Psoas muscle (tissue), 8 donors: ENCODE measurements at regions of chr7 and their contacts with region 1.

Region 1: DNA sequence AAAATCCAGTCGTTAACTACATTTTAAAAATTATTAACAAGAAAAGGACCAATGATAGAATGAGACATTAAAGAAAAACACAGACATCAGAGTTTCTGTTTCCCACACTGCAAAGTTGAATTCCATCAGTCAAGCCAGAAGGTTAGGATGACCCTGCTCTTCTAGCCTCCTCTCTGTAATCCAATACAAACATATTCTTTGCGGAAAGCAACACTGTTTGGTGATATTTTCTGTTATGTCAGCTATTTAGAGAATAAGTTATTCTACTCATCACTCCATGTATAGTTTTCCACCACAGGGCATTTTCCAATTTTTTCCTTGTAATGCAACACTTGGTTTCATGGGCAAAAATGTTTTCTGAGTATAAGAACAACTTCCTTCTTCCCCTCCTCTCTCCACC is 152.3 kb downstream of the EVX1 start:
- DNase-seq: no peak
- ATAC-seq: no peak
- H3K4me3 ChIP-seq: no peak overlapping the region
- H3K27ac ChIP-seq: no peak overlapping the region
- H3K4me1 ChIP-seq: no peaks in the 10 kb centered on the region
- H3K27me3 ChIP-seq: peaks cover 0 to 7% (median 0%) of the 10 kb centered on the region in 3 donors
- CTCF ChIP-seq: no peak

Region 2: DNA sequence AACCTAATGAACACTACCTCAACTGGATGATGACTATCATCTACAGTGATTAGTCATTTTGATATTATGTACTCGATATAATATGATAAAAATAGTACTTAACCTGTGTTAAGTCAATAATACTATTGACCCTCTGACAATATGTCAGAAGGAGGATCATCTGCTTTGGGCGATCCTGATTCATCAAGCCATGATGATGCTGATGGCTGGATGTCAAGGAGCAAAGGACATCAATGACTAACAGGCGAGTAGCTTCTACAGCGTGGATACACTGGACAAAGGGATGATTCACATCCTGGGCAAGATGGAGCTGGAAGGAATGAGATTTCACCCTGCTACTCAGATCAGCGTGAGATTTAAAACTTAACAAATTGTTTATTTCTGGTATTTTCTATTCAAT is 436.0 kb before region 1 on chr7:
- intact Hi-C with region 1: no loop called
- DNase-seq: no peak
- ATAC-seq: no peak
- H3K4me3 ChIP-seq: no peak overlapping the region
- H3K27ac ChIP-seq: no peak overlapping the region
- H3K4me1 ChIP-seq: no peaks in the 10 kb centered on the region
- H3K27me3 ChIP-seq: no peaks in the 10 kb centered on the region
- CTCF ChIP-seq: no peak

Region 3: DNA sequence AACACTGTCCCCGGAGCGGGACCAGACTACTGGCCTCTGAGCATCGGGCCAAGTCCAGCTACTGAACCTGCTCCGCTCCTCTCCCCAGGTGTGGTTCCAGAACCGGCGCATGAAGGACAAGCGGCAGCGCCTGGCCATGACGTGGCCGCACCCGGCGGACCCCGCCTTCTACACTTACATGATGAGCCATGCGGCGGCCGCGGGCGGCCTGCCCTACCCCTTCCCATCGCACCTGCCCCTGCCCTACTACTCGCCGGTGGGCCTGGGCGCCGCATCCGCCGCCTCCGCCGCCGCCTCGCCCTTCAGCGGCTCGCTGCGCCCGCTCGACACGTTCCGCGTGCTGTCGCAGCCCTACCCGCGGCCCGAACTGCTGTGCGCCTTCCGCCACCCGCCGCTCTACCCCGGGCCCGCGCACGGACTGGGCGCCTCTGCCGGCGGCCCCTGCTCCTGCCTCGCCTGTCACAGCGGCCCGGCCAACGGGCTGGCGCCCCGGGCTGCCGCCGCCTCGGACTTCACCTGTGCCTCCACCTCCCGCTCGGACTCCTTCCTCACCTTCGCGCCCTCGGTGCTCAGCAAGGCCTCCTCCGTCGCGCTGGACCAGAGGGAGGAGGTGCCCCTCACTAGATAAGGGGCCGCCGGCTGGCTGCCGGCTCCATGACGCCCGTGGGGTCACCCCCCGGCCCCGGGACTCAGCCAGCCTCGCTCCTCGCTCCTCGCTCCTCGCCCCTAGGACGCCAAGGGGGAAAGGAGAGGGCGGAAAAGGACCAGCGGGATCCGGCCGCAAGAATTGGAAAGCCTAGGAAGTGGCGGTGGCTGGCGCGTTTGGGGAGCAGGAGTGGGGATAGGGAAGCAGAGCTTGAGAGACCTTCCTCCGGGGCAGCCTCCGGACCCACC is 148.8 kb before region 1 on chr7:
- intact Hi-C with region 1: loop called in 1 of 2 experiments (anchors 5 kb)
- DNase-seq: peak in 1 of 2 donors; percentile 58
- ATAC-seq: peak; percentile 32 to 64 (median 61)
- H3K4me3 ChIP-seq: peak overlapping the region; percentile 57
- H3K27ac ChIP-seq: no peak overlapping the region
- H3K4me1 ChIP-seq: peaks cover 23% of the 10 kb centered on the region
- H3K27me3 ChIP-seq: peaks cover 0 to 100% (median 69%) of the 10 kb centered on the region in 3 donors
- CTCF ChIP-seq: no peak

Region 4: DNA sequence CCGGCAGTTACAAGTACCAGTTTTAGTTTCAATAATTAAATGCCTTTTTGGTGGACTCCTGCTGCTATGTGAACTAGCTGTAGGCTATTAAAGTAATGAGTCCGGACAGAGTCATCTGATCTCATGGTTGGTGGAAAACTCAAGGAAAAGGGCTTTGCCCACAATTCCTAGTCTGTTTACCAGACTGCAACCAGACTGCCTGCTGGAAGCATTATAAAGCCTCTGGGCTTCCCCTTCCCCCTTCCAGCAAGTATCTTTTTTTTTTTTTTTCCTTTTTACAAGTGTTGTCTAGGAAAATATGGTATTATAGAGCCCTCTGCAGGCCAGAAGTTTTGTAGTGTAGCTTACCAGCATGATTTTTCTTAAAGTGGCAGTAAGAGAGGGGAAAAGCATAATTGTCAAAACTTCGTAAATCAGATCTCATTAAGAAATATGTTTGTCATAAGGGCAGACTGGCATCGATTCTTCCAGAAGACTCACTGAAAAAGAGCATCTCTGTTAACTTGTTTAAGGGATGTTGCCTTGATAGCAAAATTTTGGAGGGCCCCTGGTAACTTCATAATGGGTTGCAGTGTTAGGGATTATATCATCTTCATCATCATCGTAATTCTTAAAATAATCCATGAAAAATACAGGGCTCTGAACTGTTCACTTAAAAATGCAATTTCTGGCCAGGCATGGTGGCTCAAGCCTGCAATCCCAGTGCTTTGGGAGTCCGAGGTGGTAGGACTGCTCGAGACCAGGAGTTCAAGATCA is 526.4 kb after region 1 on chr7:
- intact Hi-C with region 1: no loop called
- DNase-seq: no peak
- ATAC-seq: peak; percentile 52 to 87 (median 60)
- H3K4me3 ChIP-seq: peak overlapping the region; percentile 17
- H3K27ac ChIP-seq: no peak overlapping the region
- H3K4me1 ChIP-seq: no peaks in the 10 kb centered on the region
- H3K27me3 ChIP-seq: no peaks in the 10 kb centered on the region
- CTCF ChIP-seq: peak; percentile 60